ENCODE measurements at regions of chr15 and their contacts with region 1.

Region 1: DNA sequence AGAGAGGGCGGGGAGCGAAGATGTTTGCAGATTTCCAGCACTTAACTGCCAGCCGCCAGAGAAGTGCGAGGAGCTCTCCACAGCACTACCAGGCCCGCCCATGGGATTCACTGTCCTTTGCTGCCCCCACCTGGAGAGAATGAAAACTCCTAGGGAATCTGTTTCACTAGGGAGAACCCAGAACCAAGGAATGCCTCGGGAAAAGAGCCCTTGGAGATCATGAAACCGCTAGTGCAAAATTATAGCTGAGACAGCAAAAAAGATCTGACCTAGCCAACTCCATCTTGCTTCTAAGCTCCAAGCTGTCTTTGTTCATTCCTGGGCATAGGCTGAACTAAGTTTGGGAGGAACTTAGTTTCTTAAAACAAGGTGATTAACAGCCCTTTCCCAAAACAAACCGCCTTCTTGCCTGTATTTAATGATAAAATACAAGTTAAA is 82.6 kb upstream of the GCNT3 start:
- DNase-seq: peak; percentile 93
- H3K4me3 ChIP-seq: no peak overlapping the region
- H3K27ac ChIP-seq: no peak overlapping the region
- H3K4me1 ChIP-seq: no peaks in the 10 kb centered on the region
- H3K27me3 ChIP-seq: no peaks in the 10 kb centered on the region
- CTCF ChIP-seq: peak; percentile 81

Region 2: DNA sequence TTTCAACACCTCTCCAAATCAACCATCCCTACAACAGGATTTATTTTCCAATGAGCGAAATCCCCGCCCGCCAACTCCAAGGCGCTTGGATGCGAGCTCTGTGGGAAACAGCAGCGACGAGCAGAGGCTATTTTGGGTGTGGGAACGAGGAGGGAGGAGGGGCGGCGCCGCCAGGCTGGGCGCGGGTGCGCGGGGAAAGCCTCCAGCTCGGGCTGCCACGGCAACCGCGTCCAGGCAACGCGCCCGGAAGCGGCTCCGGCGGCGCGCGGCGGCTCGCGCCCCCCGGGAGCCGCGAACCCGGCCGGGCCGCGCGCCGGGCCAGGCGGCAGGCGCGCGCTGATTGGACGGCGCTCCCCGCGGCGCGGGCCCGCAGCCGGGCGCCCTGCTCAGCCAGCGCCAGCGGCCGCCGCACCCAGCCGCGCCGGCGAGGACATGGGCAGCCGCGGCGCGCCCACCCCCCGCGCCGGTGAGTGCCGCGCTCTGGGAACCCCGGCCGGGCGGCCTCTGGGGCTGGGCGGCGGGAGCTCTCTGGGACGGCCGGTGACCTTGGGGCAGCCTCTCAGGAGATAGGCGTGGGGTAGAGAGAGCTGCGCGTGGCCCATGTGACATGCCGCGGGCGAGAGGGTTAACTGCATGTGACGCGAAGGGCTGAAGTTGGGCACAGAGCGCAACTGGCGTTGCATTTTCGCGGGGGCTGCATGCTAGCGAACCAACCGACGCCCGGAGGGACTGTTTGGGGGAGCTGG is 91.0 kb before region 1 on chr15 and contains the start of gene FAM81A:
- CTCF ChIA-PET with region 1: no interaction called
- POLR2A ChIA-PET with region 1: no interaction called
- intact Hi-C with region 1: no loop called
- DNase-seq: peak; percentile 74
- H3K4me3 ChIP-seq: peak within 1 kb of the TSS; percentile 33
- H3K27ac ChIP-seq: no peak within 1 kb of the TSS
- H3K4me1 ChIP-seq: peaks cover 8% of the 10 kb centered on the region
- H3K27me3 ChIP-seq: peaks cover 69% of the 10 kb centered on the region
- CTCF ChIP-seq: no peak
- total RNA-seq, gene FAM81A: not detected in 2 replicates

Region 3: GRCh38 chr15:59616383-59616782 is 87.4 kb after region 1 on chr15:
- CTCF ChIA-PET with region 1: interaction called, 12 read pairs
- POLR2A ChIA-PET with region 1: no interaction called
- intact Hi-C with region 1: no loop called
- DNase-seq: no peak
- H3K4me3 ChIP-seq: no peak overlapping the region
- H3K27ac ChIP-seq: no peak overlapping the region
- H3K4me1 ChIP-seq: no peaks in the 10 kb centered on the region
- H3K27me3 ChIP-seq: peaks cover 34% of the 10 kb centered on the region
- CTCF ChIP-seq: no peak

Region 4: DNA sequence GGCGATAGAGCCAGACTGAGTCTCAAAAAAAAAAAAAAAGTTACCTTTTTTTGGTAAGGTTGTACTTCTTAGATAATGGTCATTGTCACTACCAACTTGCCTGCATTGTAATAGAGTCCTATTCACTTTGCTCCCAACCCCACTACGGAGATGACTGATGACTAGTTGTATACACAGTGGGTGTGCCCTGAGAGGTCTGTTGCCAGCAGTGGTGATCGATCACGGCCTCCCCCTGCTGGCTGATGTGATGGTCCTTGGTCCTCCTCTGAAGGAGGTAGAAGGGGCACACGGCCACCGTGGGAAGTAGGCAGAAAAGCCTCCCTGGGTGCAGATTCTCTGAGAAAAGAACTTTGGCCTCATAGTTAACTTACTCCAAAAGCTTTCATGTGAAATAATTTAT is 93.3 kb after region 1 on chr15:
- CTCF ChIA-PET with region 1: interaction called, 12 read pairs
- POLR2A ChIA-PET with region 1: no interaction called
- intact Hi-C with region 1: loop called (anchors 2 kb)
- DNase-seq: peak; percentile 59
- H3K4me3 ChIP-seq: no peak overlapping the region
- H3K27ac ChIP-seq: no peak overlapping the region
- H3K4me1 ChIP-seq: no peaks in the 10 kb centered on the region
- H3K27me3 ChIP-seq: peaks cover 23% of the 10 kb centered on the region
- CTCF ChIP-seq: peak; percentile 60

Measured in A673 (cell line).